ENCODE measurements at regions of chr11 and their contacts with region 1.

Region 1: DNA sequence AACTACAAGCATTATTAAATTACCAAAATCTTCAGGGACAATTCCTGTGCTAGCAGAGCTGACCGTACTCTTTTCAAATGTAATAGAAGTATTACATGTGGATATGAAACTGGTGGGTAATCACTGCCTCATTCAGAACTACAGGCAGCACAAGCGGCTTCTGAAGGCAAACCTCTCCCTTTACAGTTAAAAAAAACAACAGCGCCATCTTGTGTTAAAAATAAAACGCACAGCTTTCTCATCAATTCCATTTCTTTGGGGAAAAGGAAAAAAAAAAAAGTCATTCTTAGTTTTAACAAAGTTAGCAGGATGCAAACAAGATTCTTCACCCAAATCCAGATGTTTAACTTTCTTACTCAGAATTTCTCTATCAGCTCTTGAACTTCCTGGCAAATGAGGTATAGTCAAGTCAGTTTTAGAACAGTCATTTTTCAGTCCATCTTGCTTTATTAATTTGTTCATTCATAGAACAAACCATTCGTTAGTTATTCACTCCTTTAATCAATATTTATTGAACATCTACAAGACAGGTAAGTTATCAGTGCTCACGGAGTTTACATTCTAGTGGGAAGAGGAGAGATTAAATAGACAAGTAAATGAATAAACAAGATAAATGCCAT is 331.8 kb upstream of the MPPED2 start:
- DNase-seq: no peak
- ATAC-seq: peak; percentile 85
- H3K4me3 ChIP-seq: no peak overlapping the region
- H3K27ac ChIP-seq: no peak overlapping the region
- H3K4me1 ChIP-seq: no peaks in the 10 kb centered on the region
- H3K27me3 ChIP-seq: no peaks in the 10 kb centered on the region
- CTCF ChIP-seq: peak; percentile 44 to 66 (median 59); a peak in 5 of 6 replicates
- EP300 ChIP-seq: no peak
- POLR2A ChIP-seq: no peak
- RAD21 ChIP-seq: peak; percentile 66

Region 2: GRCh38 chr11:29343465-29344333 is 1574.3 kb before region 1 on chr11:
- CTCF ChIA-PET with region 1: interaction called, 4 read pairs
- POLR2A ChIA-PET with region 1: no interaction called
- RAD21 ChIA-PET with region 1: no interaction called
- SMC1A ChIA-PET with region 1: no interaction called
- in situ Hi-C with region 1: no loop called
- intact Hi-C with region 1: loop called (anchors 10 kb)
- DNase-seq: no peak
- ATAC-seq: peak; percentile 98
- H3K4me3 ChIP-seq: no peak overlapping the region
- H3K27ac ChIP-seq: no peak overlapping the region
- H3K4me1 ChIP-seq: no peaks in the 10 kb centered on the region
- H3K27me3 ChIP-seq: no peaks in the 10 kb centered on the region
- CTCF ChIP-seq: peak; percentile 88 to 98 (median 97)
- EP300 ChIP-seq: no peak
- POLR2A ChIP-seq: no peak
- RAD21 ChIP-seq: peak; percentile 61

Region 3: GRCh38 chr11:29432719-29433325 is 1485.1 kb before region 1 on chr11:
- CTCF ChIA-PET with region 1: interaction called, 5 read pairs
- POLR2A ChIA-PET with region 1: no interaction called
- RAD21 ChIA-PET with region 1: no interaction called
- SMC1A ChIA-PET with region 1: interaction called, 3 read pairs
- in situ Hi-C with region 1: loop called (anchors 25 kb)
- intact Hi-C with region 1: loop called (anchors 10 kb)
- DNase-seq: no peak
- ATAC-seq: peak; percentile 40; the same call in 1 of the 3 replicates
- H3K4me3 ChIP-seq: no peak overlapping the region
- H3K27ac ChIP-seq: no peak overlapping the region
- H3K4me1 ChIP-seq: no peaks in the 10 kb centered on the region
- H3K27me3 ChIP-seq: no peaks in the 10 kb centered on the region
- CTCF ChIP-seq: peak; percentile 33 to 47 (median 37); a peak in 5 of 6 replicates
- EP300 ChIP-seq: no peak
- POLR2A ChIP-seq: no peak
- RAD21 ChIP-seq: peak; percentile 45